Vagina (tissue), 2 donors: ENCODE measurements at regions of chr13 and their contacts with region 1.

Region 1: DNA sequence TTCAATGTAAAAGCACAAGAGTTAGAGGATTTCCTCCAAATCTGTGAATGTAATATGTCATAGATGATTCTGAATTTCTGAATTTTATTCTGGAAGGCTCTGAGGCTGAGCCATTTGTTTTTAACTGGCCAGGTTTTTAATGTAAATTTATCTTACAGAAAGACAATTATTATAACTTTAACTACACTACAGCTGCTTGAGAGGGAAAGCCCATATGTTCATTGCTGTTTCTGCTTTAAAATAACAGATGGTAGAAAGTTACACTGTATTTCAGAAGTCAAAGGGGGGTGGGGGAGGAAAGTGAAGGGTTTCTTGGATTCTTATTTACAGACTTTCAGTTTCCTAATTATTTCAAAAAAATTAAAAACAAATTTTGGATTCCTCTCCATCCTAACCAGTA is 62.8 kb downstream of the DNAJC15 start:
- DNase-seq: no peak
- H3K4me3 ChIP-seq: no peak overlapping the region
- H3K27ac ChIP-seq: no peak overlapping the region
- H3K4me1 ChIP-seq: peaks cover 12% of the 10 kb centered on the region
- H3K27me3 ChIP-seq: no peaks in the 10 kb centered on the region
- CTCF ChIP-seq: no peak
- POLR2A ChIP-seq: no peak

Region 2: GRCh38 chr13:43537124-43537523 is 450.9 kb after region 1 on chr13:
- intact Hi-C with region 1: no loop called
- DNase-seq: no peak
- H3K4me3 ChIP-seq: no peak overlapping the region
- H3K27ac ChIP-seq: no peak overlapping the region
- H3K4me1 ChIP-seq: no peaks in the 10 kb centered on the region
- H3K27me3 ChIP-seq: no peaks in the 10 kb centered on the region
- CTCF ChIP-seq: no peak
- POLR2A ChIP-seq: no peak

Region 3: DNA sequence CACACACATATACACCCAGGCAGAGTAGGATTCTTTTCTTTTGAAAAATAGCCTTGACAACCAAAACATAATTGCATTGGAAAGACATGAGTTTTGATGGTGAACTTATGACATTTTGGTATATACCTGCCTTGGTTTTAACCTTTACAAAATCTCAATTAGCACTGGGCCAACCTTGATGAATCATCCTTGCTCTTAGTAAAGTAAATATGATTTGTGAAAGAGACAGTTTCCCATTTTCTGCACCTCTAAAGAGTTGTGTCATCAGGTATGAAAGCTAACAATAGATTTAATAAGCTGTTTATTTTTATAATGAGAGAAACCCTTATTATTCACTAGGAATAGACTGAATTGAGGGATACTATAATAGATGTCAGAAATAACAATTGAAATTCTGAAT is 716.3 kb after region 1 on chr13:
- intact Hi-C with region 1: loop called (anchors 2 kb)
- DNase-seq: no peak
- H3K4me3 ChIP-seq: no peak overlapping the region
- H3K27ac ChIP-seq: no peak overlapping the region
- H3K4me1 ChIP-seq: no peaks in the 10 kb centered on the region
- H3K27me3 ChIP-seq: no peaks in the 10 kb centered on the region
- CTCF ChIP-seq: no peak
- POLR2A ChIP-seq: no peak